GM12878 (cell line): ENCODE measurements at regions of chr16 and their contacts with region 1.

Region 1: GRCh38 chr16:74909366-74910064 is 75.4 kb downstream of the WDR59 start:
- DNase-seq: no peak
- ATAC-seq: no peak
- H3K4me3 ChIP-seq: no peak overlapping the region
- H3K27ac ChIP-seq: no peak overlapping the region
- H3K4me1 ChIP-seq: no peaks in the 10 kb centered on the region
- H3K27me3 ChIP-seq: no peaks in the 10 kb centered on the region
- CTCF ChIP-seq: no peak
- EP300 ChIP-seq: no peak
- POLR2A ChIP-seq: no peak
- RAD21 ChIP-seq: no peak

Region 2: DNA sequence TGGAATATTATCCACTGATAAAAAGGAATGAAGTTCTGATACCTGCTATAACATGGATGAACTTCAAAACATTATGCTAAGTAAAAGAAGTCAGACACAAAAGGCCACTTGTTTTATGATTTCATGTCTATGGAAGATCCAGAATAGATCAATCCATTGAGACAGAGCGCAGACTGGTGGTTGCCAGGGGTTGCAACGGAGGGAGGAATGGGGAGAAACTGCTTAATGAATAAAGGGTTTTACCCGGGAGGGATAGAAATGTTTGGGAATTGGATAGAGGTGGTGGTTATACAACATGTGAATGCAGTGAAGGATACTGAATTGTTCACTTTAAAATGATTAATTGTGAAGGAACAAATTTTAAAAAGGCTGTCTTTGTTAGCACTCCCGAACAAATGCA is 45.2 kb after region 1 on chr16:
- CTCF ChIA-PET with region 1: interaction called, 3 read pairs
- POLR2A ChIA-PET with region 1: no interaction called
- RAD21 ChIA-PET with region 1: no interaction called
- SMC1A ChIA-PET with region 1: no interaction called
- in situ Hi-C with region 1: loop called (anchors 5 kb)
- intact Hi-C with region 1: no loop called
- DNase-seq: no peak
- ATAC-seq: no peak
- H3K4me3 ChIP-seq: no peak overlapping the region
- H3K27ac ChIP-seq: no peak overlapping the region
- H3K4me1 ChIP-seq: no peaks in the 10 kb centered on the region
- H3K27me3 ChIP-seq: no peaks in the 10 kb centered on the region
- CTCF ChIP-seq: no peak
- EP300 ChIP-seq: no peak
- POLR2A ChIP-seq: no peak
- RAD21 ChIP-seq: no peak